OCI-LY7 (cell line): ENCODE measurements at regions of chrX and their contacts with region 1.

Region 1: DNA sequence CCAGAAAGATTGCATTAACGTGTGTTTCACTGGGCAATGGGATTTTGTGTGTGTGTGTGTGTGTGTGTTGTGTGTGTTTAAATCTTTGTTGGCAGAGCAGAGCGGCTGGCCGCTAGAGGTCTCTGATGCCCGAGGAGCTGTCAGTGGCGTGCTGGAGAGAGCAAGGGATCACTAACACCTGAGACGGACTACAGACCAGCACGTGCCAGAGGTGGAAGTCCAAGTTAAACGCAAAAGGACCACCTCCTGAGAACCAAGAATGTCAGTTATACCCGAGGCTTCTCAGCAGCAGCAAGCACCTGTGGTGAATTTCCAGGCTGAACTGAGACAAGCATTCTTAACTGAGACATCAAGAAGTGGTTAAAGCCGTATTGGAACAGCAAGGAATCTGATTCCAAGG is 9.0 kb upstream of the SLC25A14 start:
- DNase-seq: peak; percentile 69
- H3K4me3 ChIP-seq: no peak overlapping the region
- H3K27ac ChIP-seq: no peak overlapping the region
- H3K4me1 ChIP-seq: no peaks in the 10 kb centered on the region
- CTCF ChIP-seq: peak; percentile 83

Region 2: GRCh38 chrX:129931411-129932015 is 399.2 kb before region 1 on chrX:
- CTCF ChIA-PET with region 1: no interaction called
- POLR2A ChIA-PET with region 1: no interaction called
- intact Hi-C with region 1: no loop called
- DNase-seq: peak; percentile 81
- H3K4me3 ChIP-seq: peak overlapping the region; percentile 73
- H3K27ac ChIP-seq: peak overlapping the region; percentile 26
- H3K4me1 ChIP-seq: peaks cover 5% of the 10 kb centered on the region
- CTCF ChIP-seq: no peak

Region 3: DNA sequence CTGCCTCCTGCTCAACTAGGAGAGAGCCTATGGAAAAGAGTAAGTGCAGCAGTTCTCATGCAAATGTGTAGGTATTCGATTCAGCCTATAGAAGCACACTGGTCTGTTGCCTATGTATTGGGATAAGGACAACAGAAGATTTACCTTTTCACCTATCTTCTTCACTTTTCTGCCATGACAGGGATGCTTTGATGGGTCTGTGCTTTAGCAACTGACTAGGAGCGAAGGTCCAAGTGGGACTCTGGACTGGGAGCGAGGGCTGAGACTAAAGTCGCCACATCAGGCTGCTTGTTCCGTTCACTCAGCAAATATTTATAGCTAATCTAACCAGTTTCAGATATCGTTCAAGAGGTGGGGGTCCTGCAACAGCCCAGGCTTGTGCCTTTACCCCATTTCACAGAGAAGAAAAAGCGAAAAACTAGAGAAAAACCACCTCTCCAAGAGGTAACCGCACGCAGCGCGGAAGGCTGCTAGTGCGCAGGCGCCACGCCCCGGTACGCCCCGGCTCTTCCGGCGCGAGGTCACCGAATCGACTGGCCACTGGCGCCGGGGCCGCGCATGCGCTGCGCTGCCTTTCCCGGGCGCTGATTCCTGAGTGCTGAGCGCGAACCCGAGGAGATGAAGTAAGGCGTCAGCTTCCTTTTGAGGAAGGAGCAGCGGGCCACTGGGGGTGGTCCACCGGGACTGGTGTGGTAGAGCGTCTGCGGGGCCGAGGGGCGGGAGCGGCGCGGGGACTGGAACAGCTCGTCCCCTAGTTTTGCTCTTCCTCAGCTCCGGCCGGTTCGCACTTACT is 70.9 kb after region 1 on chrX and contains the start of gene RBMX2:
- CTCF ChIA-PET with region 1: no interaction called
- POLR2A ChIA-PET with region 1: no interaction called
- intact Hi-C with region 1: loop called (anchors 5 kb)
- DNase-seq: peak; percentile 78
- H3K4me3 ChIP-seq: peak within 1 kb of the TSS; percentile 94
- H3K27ac ChIP-seq: peak within 1 kb of the TSS; percentile 50
- H3K4me1 ChIP-seq: peaks cover 4% of the 10 kb centered on the region
- CTCF ChIP-seq: no peak
- total RNA-seq, gene RBMX2: 17.0 and 19.5 TPM in 2 replicates

Region 4: GRCh38 chrX:130539721-130540321 is 209.1 kb after region 1 on chrX:
- CTCF ChIA-PET with region 1: no interaction called
- POLR2A ChIA-PET with region 1: no interaction called
- intact Hi-C with region 1: loop called (anchors 1 kb)
- DNase-seq: peak; percentile 50
- H3K4me3 ChIP-seq: no peak overlapping the region
- H3K27ac ChIP-seq: no peak overlapping the region
- H3K4me1 ChIP-seq: no peaks in the 10 kb centered on the region
- CTCF ChIP-seq: peak; percentile 82